RWPE1 (cell line): ENCODE measurements at regions of chr12 and their contacts with region 1.

Region 1: DNA sequence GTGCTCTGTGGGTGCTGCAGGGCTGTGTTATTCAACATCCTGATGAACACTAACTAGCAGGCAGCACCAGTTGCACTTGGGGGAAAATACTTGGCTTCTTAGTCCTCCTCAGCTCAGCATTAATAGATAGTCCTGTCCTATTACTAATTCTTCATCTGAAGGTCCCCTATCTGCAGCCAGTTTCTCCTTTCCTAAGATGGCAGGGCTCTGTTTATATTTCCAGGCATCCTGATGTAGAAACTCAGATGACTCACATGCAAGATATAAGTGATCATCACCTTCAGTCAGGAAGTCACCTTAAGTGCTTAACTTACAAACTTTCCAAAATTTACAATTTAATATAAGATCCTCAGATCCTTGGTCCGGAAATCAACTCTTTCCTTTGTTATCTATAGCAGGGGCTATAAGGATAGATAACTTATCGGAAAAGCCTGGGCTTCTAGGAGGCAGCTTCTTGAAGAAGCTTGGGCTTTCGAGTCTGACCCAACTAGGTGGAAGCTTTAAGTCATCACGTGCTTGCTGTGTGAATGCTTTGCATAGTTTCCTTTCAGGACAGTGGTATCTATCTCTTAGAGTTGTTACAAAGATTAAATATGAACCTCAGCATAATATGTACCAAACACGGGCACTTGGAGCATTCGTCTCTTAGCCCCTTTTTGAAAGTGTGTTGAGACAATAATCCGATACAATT is 181.0 kb upstream of the GRIP1 start:
- DNase-seq: no peak
- H3K27ac ChIP-seq: no peak overlapping the region
- CTCF ChIP-seq: no peak

Region 2: GRCh38 chr12:66693901-66694675 is 165.8 kb before region 1 on chr12:
- CTCF ChIA-PET with region 1: interaction called, 12 read pairs
- POLR2A ChIA-PET with region 1: no interaction called
- DNase-seq: peak; percentile 39
- H3K27ac ChIP-seq: no peak overlapping the region
- CTCF ChIP-seq: peak; percentile 74

Region 3: GRCh38 chr12:66836623-66837310 is 23.1 kb before region 1 on chr12:
- CTCF ChIA-PET with region 1: no interaction called
- POLR2A ChIA-PET with region 1: no interaction called
- DNase-seq: no peak
- H3K27ac ChIP-seq: no peak overlapping the region
- CTCF ChIP-seq: no peak